ENCODE measurements at regions of chr17 and their contacts with region 1.

Region 1: GRCh38 chr17:81601525-81602120 is 35.3 kb downstream of the NPLOC4 start:
- DNase-seq: peak; percentile 52
- H3K4me3 ChIP-seq: no peak overlapping the region
- H3K27ac ChIP-seq: no peak overlapping the region
- H3K4me1 ChIP-seq: no peaks in the 10 kb centered on the region
- H3K27me3 ChIP-seq: no peaks in the 10 kb centered on the region
- CTCF ChIP-seq: peak; percentile 74

Region 2: DNA sequence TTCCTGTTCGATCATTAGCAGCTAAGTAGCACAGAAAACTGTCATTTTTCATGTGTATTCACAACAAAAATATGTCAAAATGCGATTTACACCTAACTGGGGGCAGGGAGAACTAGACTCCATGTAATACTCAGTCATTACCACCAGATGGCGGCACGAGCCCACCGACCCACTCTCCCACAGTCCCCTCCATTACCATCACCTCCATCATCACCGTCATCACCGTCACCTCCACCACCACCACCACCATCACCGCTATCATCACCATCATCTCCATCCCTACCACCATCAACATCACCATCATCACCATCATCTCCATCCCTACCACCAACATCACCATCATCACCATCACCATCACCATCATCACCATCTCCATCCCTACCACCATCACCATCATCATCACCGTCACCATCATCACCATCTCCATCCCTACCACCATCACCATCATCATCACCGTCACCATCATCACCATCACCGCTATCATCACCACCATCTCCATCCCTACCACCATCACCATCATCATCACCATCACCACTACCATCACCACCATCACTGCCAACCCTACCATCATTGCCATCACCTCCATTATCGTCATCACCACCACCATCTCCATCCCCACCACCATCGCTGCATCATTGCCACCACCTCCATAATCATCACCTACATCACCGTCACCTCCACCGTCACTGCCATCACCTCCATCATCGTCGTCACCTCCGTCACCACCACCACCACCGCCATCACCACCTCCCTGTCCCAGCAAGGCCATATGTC is 348.1 kb before region 1 on chr17:
- intact Hi-C with region 1: loop called (anchors 5 kb)
- DNase-seq: peak; percentile 55
- H3K4me3 ChIP-seq: no peak overlapping the region
- H3K27ac ChIP-seq: no peak overlapping the region
- H3K4me1 ChIP-seq: peaks cover 41% of the 10 kb centered on the region
- H3K27me3 ChIP-seq: no peaks in the 10 kb centered on the region
- CTCF ChIP-seq: peak; percentile 70

Region 3: GRCh38 chr17:81543339-81543675 is 58.3 kb before region 1 on chr17:
- intact Hi-C with region 1: no loop called
- DNase-seq: no peak
- H3K4me3 ChIP-seq: no peak overlapping the region
- H3K27ac ChIP-seq: no peak overlapping the region
- H3K4me1 ChIP-seq: no peaks in the 10 kb centered on the region
- H3K27me3 ChIP-seq: no peaks in the 10 kb centered on the region
- CTCF ChIP-seq: no peak

Region 4: GRCh38 chr17:81558941-81559806 is 42.4 kb before region 1 on chr17:
- intact Hi-C with region 1: loop called (anchors 5 kb)
- DNase-seq: no peak
- H3K4me3 ChIP-seq: no peak overlapping the region
- H3K27ac ChIP-seq: no peak overlapping the region
- H3K4me1 ChIP-seq: no peaks in the 10 kb centered on the region
- H3K27me3 ChIP-seq: no peaks in the 10 kb centered on the region
- CTCF ChIP-seq: no peak

Measured in colonic mucosa (tissue), 4 donors.